ENCODE measurements at regions of chr6 and their contacts with region 1.

Region 1: DNA sequence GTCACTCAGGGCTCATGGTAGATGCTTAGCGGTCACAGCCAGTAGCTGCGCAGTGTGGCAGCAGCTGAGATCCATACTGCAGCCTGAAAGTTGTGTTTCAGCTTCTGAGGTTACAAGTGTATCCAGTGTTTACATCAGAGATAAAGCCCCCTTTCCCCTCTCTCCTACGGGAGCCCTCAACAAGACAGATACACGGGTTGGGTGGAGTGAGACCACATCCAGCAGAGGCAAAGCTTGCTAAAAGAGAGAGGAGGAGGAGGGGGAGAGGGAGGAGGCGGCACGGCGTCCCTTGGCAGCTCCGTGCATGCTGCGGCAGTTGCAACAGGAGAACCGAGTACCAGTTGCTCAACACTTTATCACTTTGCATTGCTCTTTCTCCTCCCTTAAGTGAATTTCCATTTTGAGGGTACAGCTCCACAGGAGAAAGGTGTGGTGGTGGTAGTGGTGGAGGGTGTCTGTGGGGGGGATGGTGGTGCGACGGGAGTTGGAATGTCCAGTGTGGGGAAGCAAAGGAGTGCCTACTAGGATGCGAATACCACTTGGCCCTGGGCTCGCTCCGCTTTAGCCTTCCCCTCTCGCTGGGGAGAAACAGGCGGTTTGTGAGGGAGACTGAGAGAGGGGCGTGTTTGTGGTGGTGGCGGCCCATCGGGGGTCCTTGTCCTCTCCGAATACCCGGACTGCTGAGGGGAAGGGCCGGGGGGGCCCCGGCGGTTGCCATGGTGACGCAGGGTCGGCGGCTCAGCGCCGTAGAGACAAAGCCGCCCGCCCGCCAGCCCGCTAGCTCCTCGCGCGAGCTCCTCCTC is 405 bp upstream of the RNF182 start:
- DNase-seq: peak; percentile 65
- ATAC-seq: peak; percentile 46
- H3K4me3 ChIP-seq: peak overlapping the region; percentile 11 to 65 (median 46)
- H3K4me3 Mint-ChIP-seq: peak overlapping the region; percentile 90
- H3K27ac ChIP-seq: no peak overlapping the region
- H3K27ac Mint-ChIP-seq: peak overlapping the region; percentile 46
- H3K4me1 ChIP-seq: peaks cover 15 to 22% of the 10 kb centered on the region in 2 donors
- H3K4me1 Mint-ChIP-seq: peaks cover 13% of the 10 kb centered on the region
- H3K27me3 ChIP-seq: peaks cover 0 to 52% (median 41%) of the 10 kb centered on the region in 4 experiments
- H3K27me3 Mint-ChIP-seq: peaks cover 59% of the 10 kb centered on the region
- CTCF ChIP-seq: no peak

Region 2: DNA sequence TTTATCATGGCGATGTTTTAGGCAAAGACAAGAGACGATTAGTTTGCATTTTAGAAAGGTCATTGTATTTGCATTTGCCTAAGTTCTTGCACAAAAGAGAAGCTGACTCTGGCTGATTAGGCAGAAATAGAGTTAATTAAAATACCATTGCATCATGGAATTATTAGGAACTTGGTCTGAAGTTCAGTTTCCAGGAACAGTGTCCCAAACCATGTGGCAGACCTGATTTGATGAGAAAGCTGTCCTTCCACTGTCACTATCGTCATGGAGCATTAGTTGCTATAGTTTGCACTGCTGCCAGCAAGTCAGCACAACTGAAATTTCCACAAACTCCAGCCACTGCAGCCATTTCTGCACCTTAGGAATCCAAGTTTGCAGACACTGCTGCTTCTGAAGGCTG is 85.7 kb before region 1 on chr6:
- CTCF ChIA-PET with region 1: no interaction called
- POLR2A ChIA-PET with region 1: no interaction called
- intact Hi-C with region 1: no loop called
- DNase-seq: no peak
- ATAC-seq: no peak
- H3K4me3 ChIP-seq: no peak overlapping the region
- H3K4me3 Mint-ChIP-seq: no peak overlapping the region
- H3K27ac ChIP-seq: no peak overlapping the region
- H3K27ac Mint-ChIP-seq: no peak overlapping the region
- H3K4me1 ChIP-seq: no peaks in the 10 kb centered on the region
- H3K4me1 Mint-ChIP-seq: no peaks in the 10 kb centered on the region
- H3K27me3 ChIP-seq: peaks cover 0 to 1% (median 0%) of the 10 kb centered on the region in 4 experiments
- H3K27me3 Mint-ChIP-seq: peaks cover 3% of the 10 kb centered on the region
- CTCF ChIP-seq: no peak

Region 3: GRCh38 chr6:14037402-14038277 is 113.3 kb after region 1 on chr6:
- CTCF ChIA-PET with region 1: no interaction called
- POLR2A ChIA-PET with region 1: no interaction called
- intact Hi-C with region 1: loop called (anchors 5 kb)
- DNase-seq: no peak
- ATAC-seq: no peak
- H3K4me3 ChIP-seq: no peak overlapping the region
- H3K4me3 Mint-ChIP-seq: no peak overlapping the region
- H3K27ac ChIP-seq: no peak overlapping the region
- H3K27ac Mint-ChIP-seq: no peak overlapping the region
- H3K4me1 ChIP-seq: no peaks in the 10 kb centered on the region
- H3K4me1 Mint-ChIP-seq: peaks cover 1% of the 10 kb centered on the region
- H3K27me3 ChIP-seq: no peaks in the 10 kb centered on the region
- H3K27me3 Mint-ChIP-seq: peaks cover 28% of the 10 kb centered on the region
- CTCF ChIP-seq: no peak